ENCODE measurements at regions of chr4 and their contacts with region 1.

Region 1: DNA sequence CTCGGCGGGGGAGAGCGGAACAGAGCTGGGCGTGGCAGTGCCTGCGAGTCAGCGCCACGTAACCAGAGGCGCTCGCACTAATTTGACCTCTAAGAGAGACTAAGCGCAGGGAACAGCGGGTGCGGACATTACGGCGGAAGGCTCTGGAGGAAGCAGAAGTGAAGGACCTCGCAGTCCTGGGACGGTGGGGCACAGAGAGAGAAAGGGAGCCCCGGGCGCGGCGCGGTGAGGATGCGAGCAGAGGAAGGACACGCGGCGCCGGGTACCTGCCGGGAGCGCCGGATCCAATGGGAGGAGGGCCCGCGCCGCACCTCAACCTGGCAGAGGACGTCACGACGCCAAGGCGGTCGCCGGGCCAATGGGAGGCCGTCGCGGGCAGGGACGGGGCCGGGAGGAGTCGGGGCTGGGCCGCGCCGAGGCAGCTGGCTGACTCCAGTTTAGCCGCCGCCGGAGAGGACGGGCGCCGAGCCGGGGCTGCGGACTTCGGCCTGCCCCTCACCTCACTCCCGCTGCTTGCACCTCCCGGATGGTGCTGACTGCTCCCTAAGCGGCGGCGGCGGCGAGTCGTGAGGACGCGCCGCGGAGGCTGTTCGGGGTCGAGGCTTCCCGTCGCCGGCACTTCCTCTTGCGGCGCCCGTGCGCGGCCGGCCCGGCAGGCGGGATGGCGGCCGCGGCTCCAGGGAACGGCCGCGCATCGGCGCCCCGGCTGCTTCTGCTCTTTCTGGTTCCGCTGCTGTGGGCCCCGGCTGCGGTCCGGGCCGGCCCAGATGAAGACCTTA is at the start of gene TMEM165:
- DNase-seq: peak; percentile 94
- ATAC-seq: peak; percentile 86
- H3K4me3 ChIP-seq: peak within 1 kb of the TSS; percentile 72
- H3K27ac ChIP-seq: peak within 1 kb of the TSS; percentile 78
- H3K4me1 ChIP-seq: peaks cover 41% of the 10 kb centered on the region
- H3K27me3 ChIP-seq: no peaks in the 10 kb centered on the region
- CTCF ChIP-seq: no peak
- total RNA-seq, gene TMEM165: 146 and 148 TPM in 2 replicates

Region 2: GRCh38 chr4:55175779-55176231 is 219.9 kb before region 1 on chr4:
- CTCF ChIA-PET with region 1: no interaction called
- POLR2A ChIA-PET with region 1: no interaction called
- intact Hi-C with region 1: loop called (anchors 1 kb)
- DNase-seq: peak; percentile 94
- ATAC-seq: peak; percentile 73
- H3K4me3 ChIP-seq: peak overlapping the region; percentile 57
- H3K27ac ChIP-seq: peak overlapping the region; percentile 87
- H3K4me1 ChIP-seq: peaks cover 54% of the 10 kb centered on the region
- H3K27me3 ChIP-seq: no peaks in the 10 kb centered on the region
- CTCF ChIP-seq: no peak

Region 3: GRCh38 chr4:55367084-55367722 is 28.5 kb before region 1 on chr4:
- CTCF ChIA-PET with region 1: no interaction called
- POLR2A ChIA-PET with region 1: no interaction called
- intact Hi-C with region 1: no loop called
- DNase-seq: no peak
- ATAC-seq: no peak
- H3K4me3 ChIP-seq: no peak overlapping the region
- H3K27ac ChIP-seq: no peak overlapping the region
- H3K4me1 ChIP-seq: no peaks in the 10 kb centered on the region
- H3K27me3 ChIP-seq: no peaks in the 10 kb centered on the region
- CTCF ChIP-seq: no peak

Region 4: GRCh38 chr4:55378617-55379463 is 16.9 kb before region 1 on chr4:
- CTCF ChIA-PET with region 1: no interaction called
- POLR2A ChIA-PET with region 1: no interaction called
- intact Hi-C with region 1: loop called (anchors 1 kb)
- DNase-seq: peak; percentile 99
- ATAC-seq: peak; percentile 94
- H3K4me3 ChIP-seq: peak overlapping the region; percentile 55
- H3K27ac ChIP-seq: peak overlapping the region; percentile 83
- H3K4me1 ChIP-seq: peaks cover 20% of the 10 kb centered on the region
- H3K27me3 ChIP-seq: no peaks in the 10 kb centered on the region
- CTCF ChIP-seq: no peak

Region 5: GRCh38 chr4:55475394-55476243 is 79.9 kb after region 1 on chr4:
- CTCF ChIA-PET with region 1: no interaction called
- POLR2A ChIA-PET with region 1: no interaction called
- intact Hi-C with region 1: no loop called
- DNase-seq: peak; percentile 73
- ATAC-seq: peak; percentile 75
- H3K4me3 ChIP-seq: no peak overlapping the region
- H3K27ac ChIP-seq: peak overlapping the region; percentile 33
- H3K4me1 ChIP-seq: peaks cover 35% of the 10 kb centered on the region
- H3K27me3 ChIP-seq: no peaks in the 10 kb centered on the region
- CTCF ChIP-seq: no peak

Region 6: DNA sequence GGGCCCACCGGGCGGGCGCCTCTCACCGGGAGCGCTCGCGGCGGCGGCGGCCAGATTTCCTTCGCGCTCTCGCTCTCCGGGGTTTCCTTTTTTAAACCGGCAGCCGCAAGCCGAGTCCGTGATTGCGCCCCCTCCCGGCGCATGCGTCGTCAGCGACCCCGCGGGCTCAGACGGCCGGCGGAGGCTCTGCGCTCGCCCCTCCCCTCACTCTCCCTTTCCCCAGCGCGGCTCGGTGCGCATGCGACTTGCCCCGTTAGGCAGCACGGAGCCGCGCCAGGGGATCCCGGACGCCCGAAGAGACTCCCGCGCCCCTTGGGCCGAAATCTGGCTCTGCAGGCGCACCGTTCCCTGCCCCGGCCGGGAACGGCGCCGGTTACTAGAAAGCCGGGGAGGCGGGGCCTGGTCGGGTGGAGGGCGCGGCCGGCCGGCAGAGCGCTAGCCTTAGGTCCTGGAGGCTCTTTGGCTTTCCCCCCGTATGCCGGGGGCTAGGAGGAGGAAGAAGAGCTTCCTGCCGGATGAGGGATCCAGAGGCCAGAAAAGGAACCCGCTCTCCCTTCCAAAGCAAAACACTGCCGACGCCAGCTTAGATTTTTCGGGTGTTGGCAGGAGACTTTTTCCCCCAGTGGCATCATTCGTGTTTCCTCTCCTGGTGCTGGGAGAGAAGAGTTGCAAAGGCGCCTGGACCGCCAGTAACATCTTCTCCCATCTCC is 151.2 kb after region 1 on chr4 and contains the start of gene CLOCK:
- CTCF ChIA-PET with region 1: interaction called, 3 read pairs
- POLR2A ChIA-PET with region 1: interaction called, 8 read pairs
- intact Hi-C with region 1: loop called (anchors 1 kb)
- DNase-seq: peak; percentile 87
- ATAC-seq: peak; percentile 49
- H3K4me3 ChIP-seq: peak within 1 kb of the TSS; percentile 86
- H3K27ac ChIP-seq: peak within 1 kb of the TSS; percentile 85
- H3K4me1 ChIP-seq: peaks cover 60% of the 10 kb centered on the region
- H3K27me3 ChIP-seq: no peaks in the 10 kb centered on the region
- CTCF ChIP-seq: peak; percentile 59
- total RNA-seq, gene CLOCK: 36.3 and 39.7 TPM in 2 replicates

Measured in PC-3 (cell line).